Gastrocnemius medialis (tissue), 4 donors: ENCODE measurements at regions of chr10 and their contacts with region 1.

Region 1: GRCh38 chr10:114631666-114632417 is 26.2 kb downstream of the ABLIM1 start:
- DNase-seq: peak in 1 of 2 donors; percentile 44
- ATAC-seq: peak; percentile 18 to 48
- H3K4me3 ChIP-seq: peak overlapping the region; percentile 56 to 60 (median 58)
- H3K27ac ChIP-seq: peak overlapping the region; percentile 67 to 81 (median 79)
- H3K4me1 ChIP-seq: peaks cover 37 to 48% of the 10 kb centered on the region in 2 donors
- H3K27me3 ChIP-seq: peaks cover 13 to 33% (median 32%) of the 10 kb centered on the region in 3 donors
- CTCF ChIP-seq: no peak
- POLR2A ChIP-seq: peak; percentile 35 to 41

Region 2: GRCh38 chr10:114499630-114500190 is 132.1 kb before region 1 on chr10:
- in situ Hi-C with region 1: no loop called
- intact Hi-C with region 1: no loop called
- DNase-seq: no peak
- ATAC-seq: no peak
- H3K4me3 ChIP-seq: no peak overlapping the region
- H3K27ac ChIP-seq: peak overlapping the region in 1 of 4 donors; percentile 27
- H3K4me1 ChIP-seq: peaks cover 0 to 4% of the 10 kb centered on the region in 2 donors
- H3K27me3 ChIP-seq: no peaks in the 10 kb centered on the region
- CTCF ChIP-seq: no peak
- POLR2A ChIP-seq: no peak

Region 3: GRCh38 chr10:114584419-114584818 is 47.4 kb before region 1 on chr10:
- in situ Hi-C with region 1: no loop called
- intact Hi-C with region 1: no loop called
- DNase-seq: no peak
- ATAC-seq: no peak
- H3K4me3 ChIP-seq: no peak overlapping the region
- H3K27ac ChIP-seq: peak overlapping the region in 1 of 4 donors; percentile 30
- H3K4me1 ChIP-seq: peaks cover 0 to 5% of the 10 kb centered on the region in 2 donors
- H3K27me3 ChIP-seq: no peaks in the 10 kb centered on the region
- CTCF ChIP-seq: no peak
- POLR2A ChIP-seq: no peak

Region 4: DNA sequence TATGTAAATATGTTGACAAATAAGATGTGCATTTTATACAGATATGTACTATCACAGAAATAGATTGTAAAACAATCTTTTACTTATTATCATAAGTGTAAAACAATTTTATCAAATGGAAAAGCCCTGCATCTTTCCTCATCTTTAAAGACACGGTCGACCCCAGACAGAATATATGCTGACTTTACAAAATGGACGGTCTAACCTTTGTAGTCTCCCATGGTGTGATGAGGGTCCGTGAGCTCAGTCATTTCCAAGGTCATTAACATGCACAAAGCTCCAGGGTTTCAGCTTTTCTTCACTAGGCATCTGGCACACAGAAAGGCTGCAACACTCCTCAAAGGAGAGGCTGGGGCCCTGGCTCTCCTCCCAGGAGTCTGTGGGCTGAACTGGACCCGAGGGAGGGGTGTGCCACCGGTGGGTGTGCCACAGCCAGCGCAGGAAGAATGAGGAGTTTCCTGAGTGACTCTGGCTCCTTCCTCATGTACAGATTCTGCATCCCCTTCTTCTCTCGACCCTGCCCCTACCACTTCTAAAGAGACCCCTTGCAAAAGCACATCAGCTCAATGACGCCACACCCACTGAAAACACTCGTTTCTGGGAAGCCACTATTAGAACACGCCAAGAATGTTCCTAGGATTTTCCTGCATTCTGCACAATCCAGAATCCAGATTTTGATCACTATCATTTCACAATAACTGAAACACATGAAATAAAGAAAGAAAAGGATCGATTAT is 52.4 kb after region 1 on chr10:
- in situ Hi-C with region 1: no loop called
- intact Hi-C with region 1: loop called (anchors 5 kb)
- DNase-seq: no peak
- ATAC-seq: peak in 1 of 2 donors; percentile 32
- H3K4me3 ChIP-seq: peak overlapping the region; percentile 23 to 47 (median 36)
- H3K27ac ChIP-seq: peak overlapping the region; percentile 74 to 83 (median 76)
- H3K4me1 ChIP-seq: peaks cover 8 to 46% of the 10 kb centered on the region in 2 donors
- H3K27me3 ChIP-seq: no peaks in the 10 kb centered on the region
- CTCF ChIP-seq: no peak
- POLR2A ChIP-seq: peak in 1 of 2 donors; percentile 5

Region 5: GRCh38 chr10:114703377-114704107 is 71.7 kb after region 1 on chr10:
- in situ Hi-C with region 1: no loop called
- intact Hi-C with region 1: loop called (anchors 5 kb)
- DNase-seq: no peak
- ATAC-seq: peak; percentile 28 to 68
- H3K4me3 ChIP-seq: no peak overlapping the region
- H3K27ac ChIP-seq: peak overlapping the region in 2 of 4 donors; percentile 18 to 35
- H3K4me1 ChIP-seq: peaks cover 0 to 7% of the 10 kb centered on the region in 2 donors
- H3K27me3 ChIP-seq: no peaks in the 10 kb centered on the region
- CTCF ChIP-seq: peak; percentile 41 to 71 (median 62)
- POLR2A ChIP-seq: no peak